Endothelial cell of umbilical vein (primary cell): ENCODE measurements at regions of chr17 and their contacts with region 1.

Region 1: DNA sequence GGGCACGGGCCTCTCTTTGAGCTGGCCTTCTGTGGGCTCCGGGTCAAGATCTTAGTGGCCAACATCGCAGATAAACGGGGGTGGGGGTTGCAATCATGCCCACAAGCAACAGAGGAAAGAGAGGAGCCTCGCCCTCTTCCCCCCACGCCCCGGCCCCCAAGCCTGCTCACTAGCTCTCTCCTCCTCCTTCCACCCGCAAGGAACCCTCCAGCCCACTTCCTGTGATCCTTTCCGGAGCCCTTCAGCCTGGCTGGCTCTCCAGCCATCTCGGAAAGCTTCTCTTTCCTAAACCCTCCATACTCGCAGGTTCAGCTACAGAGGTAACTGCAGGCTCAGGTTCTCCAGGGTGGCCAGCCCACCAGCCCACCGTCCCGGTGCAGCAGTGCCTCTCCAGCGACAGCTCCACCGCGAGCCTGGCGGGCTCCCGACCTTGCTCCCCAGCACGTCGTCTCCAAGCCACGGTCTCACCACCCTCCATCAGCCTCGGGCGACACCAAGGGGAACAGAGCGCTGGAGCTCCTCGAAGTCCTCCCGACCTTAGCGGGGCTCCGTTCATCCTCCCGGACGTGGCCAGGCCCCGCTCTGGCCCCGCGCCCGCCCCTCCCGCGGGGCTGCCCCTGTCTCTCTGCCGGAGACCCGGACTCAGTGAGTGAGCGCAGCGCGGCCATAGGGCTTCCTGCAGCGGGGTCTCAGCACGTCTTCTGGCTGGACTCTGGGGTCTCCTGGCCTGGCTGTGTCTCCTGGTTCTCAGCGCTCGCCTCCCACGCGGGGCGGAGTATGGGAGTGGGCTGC is 12.9 kb upstream of the ODF4 start:
- DNase-seq: peak; percentile 56
- H3K4me3 ChIP-seq: peak overlapping the region; percentile 60 to 74 (median 71)
- H3K27ac ChIP-seq: peak overlapping the region; percentile 86
- H3K4me1 ChIP-seq: peaks cover 20% of the 10 kb centered on the region
- H3K27me3 ChIP-seq: no peaks in the 10 kb centered on the region
- CTCF ChIP-seq: peak in 1 of 2 donors; percentile 1
- POLR2A ChIP-seq: peak; percentile 59

Region 2: GRCh38 chr17:8138672-8139371 is 187.9 kb before region 1 on chr17:
- CTCF ChIA-PET with region 1: no interaction called
- POLR2A ChIA-PET with region 1: no interaction called
- dilution Hi-C with region 1: no loop called
- intact Hi-C with region 1: no loop called
- DNase-seq: peak; percentile 98
- H3K4me3 ChIP-seq: peak overlapping the region; percentile 26 to 89 (median 80)
- H3K27ac ChIP-seq: peak overlapping the region; percentile 88
- H3K4me1 ChIP-seq: peaks cover 14% of the 10 kb centered on the region
- H3K27me3 ChIP-seq: no peaks in the 10 kb centered on the region
- CTCF ChIP-seq: peak; percentile 83 to 91
- POLR2A ChIP-seq: no peak

Region 3: GRCh38 chr17:8311131-8311790 is 15.4 kb before region 1 on chr17:
- CTCF ChIA-PET with region 1: interaction called, 4 read pairs
- POLR2A ChIA-PET with region 1: interaction called, 6 read pairs
- dilution Hi-C with region 1: no loop called
- intact Hi-C with region 1: loop called (anchors 2 kb)
- DNase-seq: peak; percentile 46
- H3K4me3 ChIP-seq: peak overlapping the region; percentile 29 to 67 (median 60)
- H3K27ac ChIP-seq: peak overlapping the region; percentile 48
- H3K4me1 ChIP-seq: peaks cover 31% of the 10 kb centered on the region
- H3K27me3 ChIP-seq: no peaks in the 10 kb centered on the region
- CTCF ChIP-seq: no peak
- POLR2A ChIP-seq: no peak